ENCODE measurements at regions of chr14 and their contacts with region 1.

Region 1: GRCh38 chr14:64400829-64401459 is 12.8 kb downstream of the MTHFD1 start:
- DNase-seq: no peak
- ATAC-seq: no peak
- H3K4me3 Mint-ChIP-seq: no peak overlapping the region
- H3K27ac Mint-ChIP-seq: peak overlapping the region; percentile 16
- H3K4me1 Mint-ChIP-seq: peaks cover 10% of the 10 kb centered on the region
- H3K27me3 Mint-ChIP-seq: no peaks in the 10 kb centered on the region

Region 2: GRCh38 chr14:64387694-64388532 is 13.0 kb before region 1 on chr14 and contains the start of gene MTHFD1:
- CTCF ChIA-PET with region 1: interaction called, 5 read pairs
- POLR2A ChIA-PET with region 1: interaction called, 20 read pairs
- DNase-seq: peak; percentile 99
- ATAC-seq: peak; percentile 92
- H3K4me3 Mint-ChIP-seq: peak within 1 kb of the TSS; percentile 99
- H3K27ac Mint-ChIP-seq: peak within 1 kb of the TSS; percentile 94
- H3K4me1 Mint-ChIP-seq: peaks cover 45% of the 10 kb centered on the region
- H3K27me3 Mint-ChIP-seq: no peaks in the 10 kb centered on the region
- total RNA-seq, gene MTHFD1: 231 to 238 TPM

Region 3: GRCh38 chr14:64598404-64598803 is 197.5 kb after region 1 on chr14:
- CTCF ChIA-PET with region 1: no interaction called
- POLR2A ChIA-PET with region 1: no interaction called
- DNase-seq: no peak
- ATAC-seq: no peak
- H3K4me3 Mint-ChIP-seq: no peak overlapping the region
- H3K27ac Mint-ChIP-seq: no peak overlapping the region
- H3K4me1 Mint-ChIP-seq: peaks cover 7% of the 10 kb centered on the region
- H3K27me3 Mint-ChIP-seq: peaks cover 34% of the 10 kb centered on the region